ENCODE measurements at regions of chr16 and their contacts with region 1.

Region 1: DNA sequence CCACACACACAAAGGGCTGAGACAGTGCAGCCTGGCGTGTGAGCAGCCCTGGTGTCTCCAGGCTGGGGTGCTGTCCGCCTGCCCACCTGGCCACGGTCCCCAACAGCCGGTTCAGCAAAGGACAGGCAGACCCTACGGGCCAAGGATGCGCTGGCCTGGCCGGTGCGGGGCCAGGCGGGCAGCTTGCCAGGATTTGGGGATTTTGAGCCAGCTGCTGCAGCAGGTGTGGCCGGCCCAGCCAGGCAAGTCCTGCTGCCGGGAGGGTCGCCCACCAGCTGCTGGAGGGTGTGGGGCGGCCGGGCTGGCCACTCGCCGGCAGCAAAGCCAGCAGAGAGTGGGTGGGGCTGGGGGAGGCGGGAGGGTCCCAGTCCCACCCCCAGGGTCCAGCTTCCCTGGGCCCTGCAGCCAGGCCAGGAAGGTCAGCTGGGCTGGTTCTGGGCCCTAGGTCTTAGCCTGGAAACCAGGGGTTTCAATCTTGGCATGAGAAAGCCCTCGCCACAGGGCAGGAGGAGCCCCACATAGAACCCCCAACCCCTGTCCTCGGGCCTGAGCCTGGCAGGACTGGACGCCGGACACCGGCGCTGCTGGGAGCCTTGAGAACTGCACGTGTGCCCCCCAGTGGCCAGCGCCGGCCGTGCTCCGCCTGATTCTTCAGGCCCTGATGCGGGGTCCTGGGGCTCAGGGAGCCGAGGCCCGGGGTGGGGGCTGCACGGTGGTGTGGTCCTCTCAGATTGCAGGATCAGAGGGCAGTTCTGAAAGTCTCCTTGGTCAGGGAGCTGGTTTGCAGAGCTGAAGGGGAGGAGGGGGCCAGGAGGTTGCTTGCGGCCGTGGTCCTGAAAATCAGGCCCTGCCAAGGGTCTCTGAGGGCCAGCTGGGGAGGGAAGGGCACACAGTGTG is 17.6 kb upstream of the SSTR5 start:
- DNase-seq: peak; percentile 88
- ATAC-seq: peak; percentile 87
- H3K4me3 Mint-ChIP-seq: no peak overlapping the region
- H3K27ac Mint-ChIP-seq: no peak overlapping the region
- H3K4me1 Mint-ChIP-seq: no peaks in the 10 kb centered on the region
- H3K27me3 Mint-ChIP-seq: peaks cover 5% of the 10 kb centered on the region
- CTCF ChIP-seq: peak; percentile 73

Region 2: DNA sequence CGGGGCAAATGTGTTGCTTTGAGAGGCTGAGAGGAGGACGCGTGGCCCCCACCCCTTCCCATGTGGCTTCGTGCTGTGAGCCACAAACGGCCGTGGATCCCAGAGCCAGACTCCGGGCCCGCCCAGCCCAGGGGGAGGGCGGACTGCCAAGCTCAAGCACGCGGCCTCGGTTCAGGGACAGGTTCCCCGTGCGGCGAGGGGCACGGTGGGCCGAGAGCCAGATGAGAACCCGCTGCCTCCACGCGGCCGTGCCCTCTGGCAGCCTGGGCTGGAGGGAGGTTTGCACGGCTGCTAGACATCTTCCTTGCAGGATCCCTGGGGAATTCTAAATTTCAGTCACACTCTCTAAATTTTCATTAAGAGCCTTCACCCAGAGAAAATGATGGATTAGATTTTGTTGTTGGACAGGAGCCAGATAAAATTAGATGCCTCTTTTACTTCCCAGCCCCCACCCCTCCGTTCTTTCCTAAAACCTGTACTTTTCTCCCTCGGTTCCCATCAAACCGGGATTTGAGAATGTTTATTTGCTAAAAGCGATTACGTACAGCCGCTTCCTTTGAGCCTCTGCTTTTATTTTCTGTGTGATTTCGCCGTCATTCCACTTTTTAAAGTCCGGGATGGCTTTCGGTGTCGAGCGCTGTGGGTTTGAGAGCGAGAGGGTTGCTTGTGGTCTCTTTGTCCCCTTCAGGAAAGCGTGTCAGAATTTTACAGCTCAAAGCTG is 229.4 kb before region 1 on chr16:
- CTCF ChIA-PET with region 1: interaction called, 31 read pairs
- POLR2A ChIA-PET with region 1: no interaction called
- DNase-seq: no peak
- ATAC-seq: no peak
- H3K4me3 Mint-ChIP-seq: no peak overlapping the region
- H3K27ac Mint-ChIP-seq: no peak overlapping the region; the same call in 1 of the 2 replicates
- H3K4me1 Mint-ChIP-seq: peaks cover 4% of the 10 kb centered on the region
- H3K27me3 Mint-ChIP-seq: no peaks in the 10 kb centered on the region
- CTCF ChIP-seq: no peak

Region 3: DNA sequence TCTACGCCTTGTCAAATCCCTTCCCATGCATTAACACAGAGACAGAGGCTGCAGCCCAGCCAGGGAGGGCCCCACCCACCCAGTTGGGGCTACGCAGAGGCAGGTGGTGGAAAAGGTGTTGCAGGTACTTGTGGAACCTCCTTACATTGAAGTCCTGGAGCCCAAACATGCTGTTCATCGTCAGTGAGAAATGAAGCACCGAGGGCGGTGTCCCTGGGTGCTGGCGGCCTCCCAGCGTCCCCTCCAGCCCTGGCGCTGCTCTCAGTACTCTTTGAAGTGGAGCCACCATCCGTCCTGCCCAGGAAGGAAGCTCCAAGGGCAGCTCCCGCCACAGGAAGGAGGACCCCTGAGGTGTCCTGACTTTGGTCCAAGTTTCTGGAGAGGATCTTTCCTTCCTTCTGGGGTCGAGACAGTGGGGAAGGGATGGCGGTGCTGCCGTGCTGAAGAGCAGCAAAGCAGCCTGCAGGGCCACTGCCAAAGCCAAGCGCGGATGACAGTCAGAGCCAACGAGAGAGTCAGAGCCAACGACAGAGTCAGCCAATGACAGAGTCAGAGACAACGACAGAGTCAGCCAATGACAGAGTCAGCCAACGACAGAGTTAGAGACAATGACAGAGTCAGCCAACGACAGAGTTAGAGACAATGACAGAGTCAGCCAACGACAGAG is 107.5 kb before region 1 on chr16:
- CTCF ChIA-PET with region 1: no interaction called
- POLR2A ChIA-PET with region 1: no interaction called
- DNase-seq: no peak
- ATAC-seq: no peak
- H3K4me3 Mint-ChIP-seq: no peak overlapping the region
- H3K27ac Mint-ChIP-seq: 0 out of 2 replicates have a peak overlapping the region, but pooled peaks have one; percentile 76
- H3K4me1 Mint-ChIP-seq: no peaks in the 10 kb centered on the region
- H3K27me3 Mint-ChIP-seq: no peaks in the 10 kb centered on the region
- CTCF ChIP-seq: no peak

Region 4: GRCh38 chr16:964356-965042 is 90.4 kb before region 1 on chr16:
- CTCF ChIA-PET with region 1: interaction called, 17 read pairs
- POLR2A ChIA-PET with region 1: no interaction called
- DNase-seq: no peak
- ATAC-seq: no peak
- H3K4me3 Mint-ChIP-seq: no peak overlapping the region
- H3K27ac Mint-ChIP-seq: 0 out of 2 replicates have a peak overlapping the region, but pooled peaks have one; percentile 27
- H3K4me1 Mint-ChIP-seq: peaks cover 5% of the 10 kb centered on the region
- H3K27me3 Mint-ChIP-seq: 0 out of 2 replicates have a peak, but pooled peaks cover under 1% of the 10 kb centered on the region
- CTCF ChIP-seq: no peak

Region 5: GRCh38 chr16:997440-998051 is 57.4 kb before region 1 on chr16:
- CTCF ChIA-PET with region 1: interaction called, 11 read pairs
- POLR2A ChIA-PET with region 1: no interaction called
- DNase-seq: peak; percentile 64
- ATAC-seq: peak; percentile 86
- H3K4me3 Mint-ChIP-seq: no peak overlapping the region
- H3K27ac Mint-ChIP-seq: no peak overlapping the region
- H3K4me1 Mint-ChIP-seq: peaks cover 5% of the 10 kb centered on the region; the same call in 1 of the 2 replicates
- H3K27me3 Mint-ChIP-seq: peaks cover 19% of the 10 kb centered on the region
- CTCF ChIP-seq: no peak

Region 6: DNA sequence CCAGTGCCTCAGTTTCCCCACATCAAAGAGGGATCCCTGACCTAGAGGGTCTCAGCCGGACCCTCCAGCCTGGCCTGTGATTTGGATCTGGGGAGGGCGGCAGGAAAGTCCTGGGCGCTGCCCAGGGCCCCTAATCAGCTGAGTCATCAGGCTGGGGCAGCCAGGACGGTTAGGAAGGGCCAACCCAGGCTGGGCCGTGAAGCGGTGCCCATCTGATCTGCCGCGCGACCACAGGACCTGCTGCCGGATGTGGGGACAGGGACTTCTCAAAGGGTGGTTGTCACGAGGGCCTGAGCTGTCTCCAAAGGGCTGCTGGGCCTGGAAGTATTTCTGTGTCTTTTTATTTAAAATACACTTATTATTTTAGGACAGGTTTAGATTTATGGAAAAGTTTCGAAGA is 190.0 kb after region 1 on chr16:
- CTCF ChIA-PET with region 1: no interaction called
- POLR2A ChIA-PET with region 1: no interaction called
- DNase-seq: no peak
- ATAC-seq: no peak
- H3K4me3 Mint-ChIP-seq: no peak overlapping the region
- H3K27ac Mint-ChIP-seq: no peak overlapping the region
- H3K4me1 Mint-ChIP-seq: no peaks in the 10 kb centered on the region; the same call in 1 of the 2 replicates
- H3K27me3 Mint-ChIP-seq: peaks cover 27% of the 10 kb centered on the region
- CTCF ChIP-seq: no peak